ENCODE measurements at regions of chr5 and their contacts with region 1.

Region 1: DNA sequence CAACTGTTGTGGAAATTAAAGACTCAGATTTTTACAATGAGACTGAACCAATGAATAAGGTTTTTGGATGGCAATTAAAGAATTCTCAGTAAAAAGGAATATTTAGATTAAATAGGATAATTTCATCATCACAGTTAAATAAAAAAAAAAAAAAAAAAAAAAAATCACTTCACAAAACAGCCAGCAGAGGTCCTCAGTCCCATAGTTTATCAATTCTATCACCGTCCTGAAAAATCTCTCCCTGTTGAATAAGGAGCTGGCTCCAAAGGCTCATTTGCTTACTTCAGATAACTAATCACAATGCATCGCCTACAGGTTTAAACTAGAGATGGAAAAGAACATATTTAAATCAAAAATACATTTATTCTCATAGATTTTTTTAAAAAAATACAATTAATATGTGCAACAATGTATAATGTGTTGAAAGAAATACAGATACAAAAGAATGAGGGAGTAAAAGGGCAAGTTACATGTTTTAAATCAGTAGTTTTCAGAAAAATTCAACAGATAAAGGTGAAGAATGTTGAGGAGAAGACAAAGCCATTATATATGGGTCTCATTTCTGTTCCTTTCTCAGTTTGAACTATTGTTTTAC is 175.8 kb upstream of the CHD1 start:
- DNase-seq: no peak
- H3K4me3 ChIP-seq: no peak overlapping the region
- H3K27ac ChIP-seq: no peak overlapping the region
- H3K4me1 ChIP-seq: no peaks in the 10 kb centered on the region
- H3K27me3 ChIP-seq: no peaks in the 10 kb centered on the region
- CTCF ChIP-seq: peak; percentile 79

Region 2: GRCh38 chr5:99004960-99005359 is 99.7 kb before region 1 on chr5:
- CTCF ChIA-PET with region 1: no interaction called
- POLR2A ChIA-PET with region 1: no interaction called
- intact Hi-C with region 1: no loop called
- DNase-seq: no peak
- H3K4me3 ChIP-seq: no peak overlapping the region
- H3K27ac ChIP-seq: no peak overlapping the region
- H3K4me1 ChIP-seq: peaks cover 4% of the 10 kb centered on the region; the same call in 1 of the 2 replicates
- H3K27me3 ChIP-seq: no peaks in the 10 kb centered on the region
- CTCF ChIP-seq: no peak

Region 3: DNA sequence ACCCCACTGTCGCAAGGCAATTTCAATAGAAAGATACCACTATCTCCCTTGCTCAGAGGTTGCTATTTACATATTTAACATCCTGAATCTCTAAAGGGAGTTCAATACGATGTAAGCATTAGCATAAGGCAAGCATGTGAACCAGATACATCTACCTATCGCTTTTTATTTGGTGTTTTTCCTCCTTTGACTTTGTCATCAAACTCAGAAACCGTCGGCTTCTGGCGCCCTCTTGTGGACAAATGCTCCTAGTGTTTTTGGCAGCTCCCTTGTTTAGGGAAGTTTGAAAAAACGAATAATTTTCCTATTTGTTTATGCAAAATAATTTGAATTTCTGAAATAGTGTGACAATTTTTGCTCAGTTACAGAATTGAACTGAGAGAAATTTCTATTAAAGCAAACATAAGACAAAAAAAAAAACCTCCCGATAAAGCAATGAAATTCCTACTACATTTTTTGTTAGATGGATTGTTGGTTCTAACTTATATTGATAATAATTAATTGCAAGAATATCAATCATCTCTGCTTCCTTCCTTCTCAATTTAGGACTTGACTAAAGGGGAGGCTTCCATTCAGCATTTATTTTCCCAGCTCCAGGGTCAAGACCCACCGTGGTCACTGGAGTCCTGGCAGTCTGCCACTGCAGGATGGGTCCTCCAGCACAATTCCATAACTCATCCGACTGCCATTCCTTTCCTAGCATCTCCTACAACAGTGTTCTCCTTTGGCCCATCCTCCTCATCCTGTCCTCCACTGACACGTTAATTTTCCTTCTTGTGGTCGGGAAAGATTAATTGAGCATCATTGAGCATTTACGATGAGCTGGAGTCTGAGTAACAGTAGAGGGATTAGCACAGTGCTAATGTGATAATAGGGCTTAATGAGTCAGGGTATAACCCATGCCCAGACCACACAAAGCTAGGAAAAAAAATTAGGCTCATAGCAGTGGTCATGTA is 44.1 kb before region 1 on chr5:
- CTCF ChIA-PET with region 1: interaction called, 14 read pairs
- POLR2A ChIA-PET with region 1: interaction called, 3 read pairs
- intact Hi-C with region 1: no loop called
- DNase-seq: peak; percentile 58 to 71
- H3K4me3 ChIP-seq: no peak overlapping the region
- H3K27ac ChIP-seq: no peak overlapping the region
- H3K4me1 ChIP-seq: peaks cover 15% of the 10 kb centered on the region
- H3K27me3 ChIP-seq: no peaks in the 10 kb centered on the region
- CTCF ChIP-seq: peak; percentile 92

Region 4: GRCh38 chr5:100311807-100312206 is 1207.2 kb after region 1 on chr5:
- CTCF ChIA-PET with region 1: no interaction called
- POLR2A ChIA-PET with region 1: no interaction called
- intact Hi-C with region 1: loop called (anchors 5 kb)
- DNase-seq: no peak
- H3K4me3 ChIP-seq: no peak overlapping the region
- H3K27ac ChIP-seq: no peak overlapping the region
- H3K4me1 ChIP-seq: no peaks in the 10 kb centered on the region
- H3K27me3 ChIP-seq: no peaks in the 10 kb centered on the region
- CTCF ChIP-seq: no peak

Region 5: GRCh38 chr5:100992354-100992753 is 1887.7 kb after region 1 on chr5:
- CTCF ChIA-PET with region 1: interaction called, 14 read pairs
- POLR2A ChIA-PET with region 1: no interaction called
- intact Hi-C with region 1: no loop called
- DNase-seq: no peak
- H3K4me3 ChIP-seq: no peak overlapping the region
- H3K27ac ChIP-seq: no peak overlapping the region
- H3K4me1 ChIP-seq: no peaks in the 10 kb centered on the region
- H3K27me3 ChIP-seq: no peaks in the 10 kb centered on the region
- CTCF ChIP-seq: no peak

Measured in PC-9 (cell line).